Left ventricle myocardium inferior (tissue), 1 donor: ENCODE measurements at regions of chr22 and their contacts with region 1.

Region 1: GRCh38 chr22:45441138-45441537 is 27.6 kb downstream of the RIBC2 start:
- DNase-seq: peak; percentile 53
- H3K4me3 ChIP-seq: no peak overlapping the region
- H3K27ac ChIP-seq: no peak overlapping the region
- H3K4me1 ChIP-seq: no peaks in the 10 kb centered on the region
- H3K27me3 ChIP-seq: peaks cover 3% of the 10 kb centered on the region
- CTCF ChIP-seq: peak; percentile 79

Region 2: GRCh38 chr22:45263463-45264269 is 177.5 kb before region 1 on chr22:
- intact Hi-C with region 1: loop called (anchors 2 kb)
- DNase-seq: peak; percentile 72
- H3K4me3 ChIP-seq: no peak overlapping the region
- H3K27ac ChIP-seq: peak overlapping the region; percentile 57
- H3K4me1 ChIP-seq: peaks cover 17% of the 10 kb centered on the region
- H3K27me3 ChIP-seq: peaks cover 14% of the 10 kb centered on the region
- CTCF ChIP-seq: peak; percentile 80

Region 3: DNA sequence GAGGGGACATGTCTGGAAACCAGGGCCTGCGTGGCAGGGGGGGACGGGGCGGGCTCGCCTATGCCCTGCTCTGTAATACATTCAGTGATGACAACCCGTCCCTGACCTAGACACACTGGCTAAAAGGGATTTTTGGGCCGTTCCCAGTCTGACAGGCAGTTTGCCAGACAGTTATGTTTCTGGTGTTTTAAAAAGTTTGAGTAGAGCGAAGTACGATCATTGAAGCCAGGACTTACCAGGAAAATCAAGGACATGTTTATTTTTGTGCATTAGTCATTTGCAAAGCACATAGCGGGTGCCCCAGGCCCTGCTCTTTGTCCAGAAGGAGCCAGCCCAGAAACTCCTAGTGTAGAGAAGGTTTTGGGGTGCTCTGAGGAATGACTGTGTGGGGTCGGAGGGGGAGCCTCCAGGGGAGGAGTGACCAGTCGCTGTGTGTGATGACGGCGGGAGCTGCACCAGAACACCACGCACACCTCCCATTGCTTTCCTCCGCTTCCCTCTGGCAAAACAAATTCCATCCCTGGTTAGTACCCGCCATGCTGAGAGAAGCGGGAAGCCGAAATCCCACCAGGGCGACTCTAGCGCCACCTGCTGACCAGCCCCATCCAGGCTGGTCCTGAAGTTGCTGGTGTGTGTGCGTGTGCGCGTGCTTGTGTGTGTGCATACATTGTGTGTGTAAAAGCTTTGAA is 112.4 kb after region 1 on chr22:
- intact Hi-C with region 1: loop called (anchors 5 kb)
- DNase-seq: peak; percentile 77
- H3K4me3 ChIP-seq: no peak overlapping the region
- H3K27ac ChIP-seq: peak overlapping the region; percentile 81
- H3K4me1 ChIP-seq: peaks cover 45% of the 10 kb centered on the region
- H3K27me3 ChIP-seq: peaks cover 21% of the 10 kb centered on the region
- CTCF ChIP-seq: peak; percentile 92